ENCODE measurements at regions of chr7 and their contacts with region 1.

Region 1: DNA sequence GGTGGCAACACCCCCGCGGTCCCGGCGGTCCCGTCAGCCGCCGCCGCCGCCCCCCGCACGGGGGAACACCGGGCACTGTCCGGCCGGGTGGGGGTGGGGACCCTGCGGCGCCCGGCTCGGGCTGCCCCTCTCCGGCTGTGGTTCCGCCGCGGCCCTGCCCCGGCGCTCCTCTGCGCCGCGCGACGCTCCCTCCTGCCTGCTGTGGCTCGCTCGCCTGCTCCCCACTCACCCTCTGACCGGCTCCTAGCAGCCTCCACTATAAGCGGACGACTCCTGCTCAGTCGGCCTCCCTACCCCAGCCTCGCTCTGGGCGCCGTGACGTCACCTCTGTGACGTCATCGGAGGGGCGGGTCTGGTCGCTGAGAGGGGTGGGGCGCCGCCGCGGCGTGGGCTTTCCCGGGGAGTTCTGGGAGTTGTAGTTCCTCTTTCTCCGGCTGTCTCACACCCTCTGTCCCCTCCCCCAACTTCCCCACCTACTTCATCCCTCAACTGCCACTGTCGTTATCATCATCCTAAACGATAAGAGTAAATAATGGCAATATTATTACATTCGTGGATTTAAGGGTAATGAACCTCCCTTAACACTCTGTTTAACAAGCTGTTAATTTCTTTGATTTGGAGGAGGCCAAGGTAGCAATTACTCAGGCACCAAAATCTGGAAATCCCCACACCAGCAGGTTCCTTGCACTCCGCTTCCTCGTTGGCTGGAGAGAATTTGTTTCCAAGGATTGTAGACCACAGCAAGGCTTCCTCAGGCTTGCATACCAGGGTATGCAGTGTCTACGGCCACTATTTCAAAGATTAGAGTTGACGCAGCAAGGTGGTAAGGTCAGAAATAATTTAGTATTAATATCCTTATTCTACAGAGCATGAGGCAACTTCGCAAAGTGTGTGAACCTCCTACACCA is at the start of gene UBE2H:
- DNase-seq: peak; percentile 89 to 96 (median 94)
- H3K4me3 ChIP-seq: peak within 1 kb of the TSS; percentile 65 to 99 (median 91)
- H3K27ac ChIP-seq: peak within 1 kb of the TSS; percentile 66 to 98 (median 94)
- H3K27me3 ChIP-seq: no peaks in the 10 kb centered on the region
- CTCF ChIP-seq: peak in 2 of 56 donors; percentile 12 to 21
- total RNA-seq, gene UBE2H: 66.1 to 118 (median 87.6) TPM

Region 2: GRCh38 chr7:129767120-129768015 is 185.5 kb before region 1 on chr7:
- intact Hi-C with region 1: no loop called
- DNase-seq: no peak
- H3K4me3 ChIP-seq: no peak overlapping the region
- H3K27ac ChIP-seq: no peak overlapping the region
- H3K27me3 ChIP-seq: peaks cover 0 to 12% (median 0%) of the 10 kb centered on the region in 45 donors
- CTCF ChIP-seq: no peak

Region 3: GRCh38 chr7:129925416-129926002 is 27.4 kb before region 1 on chr7:
- intact Hi-C with region 1: loop called in 1 of 2 experiments (anchors 2 kb)
- DNase-seq: no peak
- H3K4me3 ChIP-seq: peak overlapping the region in 30 of 59 donors; percentile 2 to 51 (median 28)
- H3K27ac ChIP-seq: peak overlapping the region in 56 of 59 donors; percentile 0 to 85 (median 64)
- H3K27me3 ChIP-seq: no peaks in the 10 kb centered on the region
- CTCF ChIP-seq: peak in 1 of 56 donors; percentile 16

Region 4: GRCh38 chr7:129969807-129970446 is 17.0 kb after region 1 on chr7:
- intact Hi-C with region 1: no loop called
- DNase-seq: no peak
- H3K4me3 ChIP-seq: no peak overlapping the region
- H3K27ac ChIP-seq: no peak overlapping the region
- H3K27me3 ChIP-seq: no peaks in the 10 kb centered on the region
- CTCF ChIP-seq: no peak